Ascending aorta (tissue), 2 donors: ENCODE measurements at regions of chr7 and their contacts with region 1.

Region 1: GRCh38 chr7:24572997-24573625 is at the start of gene PALS2:
- DNase-seq: peak in 1 of 2 donors; percentile 87
- H3K4me3 ChIP-seq: peak within 1 kb of the TSS; percentile 86 to 99
- H3K27ac ChIP-seq: peak within 1 kb of the TSS; percentile 88 to 95
- H3K4me1 ChIP-seq: peaks cover 0 to 8% of the 10 kb centered on the region in 2 donors
- H3K27me3 ChIP-seq: no peaks in the 10 kb centered on the region
- CTCF ChIP-seq: no peak
- total RNA-seq, gene PALS2: 5.7 TPM

Region 2: GRCh38 chr7:23531794-23532489 is 1041.2 kb before region 1 on chr7 and contains the start of gene TRA2A:
- intact Hi-C with region 1: loop called (anchors 5 kb)
- DNase-seq: peak; percentile 85 to 98
- H3K4me3 ChIP-seq: peak within 1 kb of the TSS; percentile 90 to 97
- H3K27ac ChIP-seq: peak within 1 kb of the TSS; percentile 95 to 99
- H3K4me1 ChIP-seq: peaks cover 3 to 29% of the 10 kb centered on the region in 2 donors
- H3K27me3 ChIP-seq: no peaks in the 10 kb centered on the region
- CTCF ChIP-seq: no peak
- total RNA-seq, gene TRA2A: 14.4 TPM

Region 3: DNA sequence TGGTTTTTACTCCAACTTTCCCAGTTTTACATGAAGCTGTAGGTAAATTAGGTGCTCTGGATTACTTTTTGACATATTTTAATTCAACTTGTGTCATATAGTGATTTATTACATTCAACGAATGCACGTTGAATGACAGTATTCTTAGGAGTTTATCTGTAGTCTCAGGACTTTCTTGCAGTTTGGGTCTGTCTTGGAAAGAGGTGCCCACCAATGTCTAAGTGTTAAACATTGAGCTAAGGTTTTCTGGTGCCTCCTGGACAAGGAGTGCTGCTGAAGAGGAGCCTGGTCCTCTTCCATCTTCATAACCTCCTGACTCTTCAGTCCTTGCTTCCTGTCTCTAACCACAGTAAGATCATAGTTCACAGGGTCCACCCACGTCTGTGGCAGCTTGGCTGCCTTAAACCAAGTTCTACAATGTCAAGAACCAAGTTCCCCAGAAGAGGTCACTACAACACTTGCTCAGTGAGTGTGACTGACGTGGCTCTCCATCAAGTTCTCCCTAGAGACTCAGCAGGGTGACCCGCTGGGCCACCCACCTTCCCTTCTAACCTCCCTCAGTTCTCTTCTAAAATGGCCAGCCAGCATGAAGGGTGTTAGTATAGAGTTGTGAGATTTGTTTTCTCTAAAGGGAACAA is 283.0 kb before region 1 on chr7:
- intact Hi-C with region 1: no loop called
- DNase-seq: no peak
- H3K4me3 ChIP-seq: no peak overlapping the region
- H3K27ac ChIP-seq: no peak overlapping the region
- H3K4me1 ChIP-seq: no peaks in the 10 kb centered on the region
- H3K27me3 ChIP-seq: no peaks in the 10 kb centered on the region
- CTCF ChIP-seq: peak in 2 of 3 experiments; percentile 23 to 42

Region 4: GRCh38 chr7:24477398-24478136 is 95.5 kb before region 1 on chr7:
- intact Hi-C with region 1: loop called (anchors 2 kb)
- DNase-seq: peak in 1 of 2 donors; percentile 85
- H3K4me3 ChIP-seq: peak overlapping the region; percentile 4 to 21
- H3K27ac ChIP-seq: peak overlapping the region; percentile 77 to 81
- H3K4me1 ChIP-seq: peaks cover 0 to 20% of the 10 kb centered on the region in 2 donors
- H3K27me3 ChIP-seq: no peaks in the 10 kb centered on the region
- CTCF ChIP-seq: no peak

Region 5: GRCh38 chr7:24665564-24666294 is 92.6 kb after region 1 on chr7:
- intact Hi-C with region 1: loop called (anchors 1 kb)
- DNase-seq: no peak
- H3K4me3 ChIP-seq: no peak overlapping the region
- H3K27ac ChIP-seq: no peak overlapping the region
- H3K4me1 ChIP-seq: no peaks in the 10 kb centered on the region
- H3K27me3 ChIP-seq: no peaks in the 10 kb centered on the region
- CTCF ChIP-seq: peak; percentile 36 to 71 (median 52)

Region 6: DNA sequence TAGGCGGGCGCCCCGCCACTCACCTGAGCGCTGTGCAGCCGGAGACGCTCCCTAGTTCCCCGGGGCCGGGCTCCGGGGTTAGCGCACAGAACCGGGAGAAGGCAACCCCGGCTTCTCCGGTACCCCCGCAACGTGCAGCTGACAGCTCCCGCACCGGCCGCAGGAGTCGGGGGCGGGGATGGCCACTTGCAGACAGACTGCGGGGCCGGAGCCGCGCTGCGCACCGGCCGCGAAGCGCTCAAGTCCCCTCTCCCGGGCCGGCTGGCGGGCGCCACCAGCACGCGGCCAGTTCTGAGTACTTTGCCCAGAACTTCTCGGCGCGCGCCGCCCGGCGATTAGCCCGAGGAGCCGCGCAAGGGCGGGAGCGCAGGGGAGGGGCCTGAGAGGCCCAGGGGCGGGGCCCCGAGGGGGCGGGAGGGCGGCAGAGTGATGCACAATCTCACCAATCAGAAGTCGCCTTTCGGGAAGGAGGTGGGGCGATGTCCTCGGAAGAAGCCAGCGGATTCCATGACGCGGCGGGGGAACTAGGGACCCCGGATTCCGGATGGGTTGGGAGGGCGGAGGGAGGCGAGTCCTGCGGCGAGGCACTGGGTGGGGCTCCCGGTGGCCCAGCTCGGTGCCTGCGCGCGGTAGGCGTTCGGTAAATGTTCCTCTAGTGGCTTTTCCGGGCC is 406.9 kb after region 1 on chr7 and contains the start of gene OSBPL3:
- intact Hi-C with region 1: loop called (anchors 10 kb)
- DNase-seq: peak; percentile 77 to 97
- H3K4me3 ChIP-seq: peak within 1 kb of the TSS; percentile 66 to 94
- H3K27ac ChIP-seq: peak within 1 kb of the TSS; percentile 66 to 83
- H3K4me1 ChIP-seq: peaks cover 0 to 3% of the 10 kb centered on the region in 2 donors
- H3K27me3 ChIP-seq: no peaks in the 10 kb centered on the region
- CTCF ChIP-seq: no peak
- total RNA-seq, gene OSBPL3: 0.96 TPM